Mammary epithelial cell (primary cell): ENCODE measurements at regions of chr6 and their contacts with region 1.

Region 1: DNA sequence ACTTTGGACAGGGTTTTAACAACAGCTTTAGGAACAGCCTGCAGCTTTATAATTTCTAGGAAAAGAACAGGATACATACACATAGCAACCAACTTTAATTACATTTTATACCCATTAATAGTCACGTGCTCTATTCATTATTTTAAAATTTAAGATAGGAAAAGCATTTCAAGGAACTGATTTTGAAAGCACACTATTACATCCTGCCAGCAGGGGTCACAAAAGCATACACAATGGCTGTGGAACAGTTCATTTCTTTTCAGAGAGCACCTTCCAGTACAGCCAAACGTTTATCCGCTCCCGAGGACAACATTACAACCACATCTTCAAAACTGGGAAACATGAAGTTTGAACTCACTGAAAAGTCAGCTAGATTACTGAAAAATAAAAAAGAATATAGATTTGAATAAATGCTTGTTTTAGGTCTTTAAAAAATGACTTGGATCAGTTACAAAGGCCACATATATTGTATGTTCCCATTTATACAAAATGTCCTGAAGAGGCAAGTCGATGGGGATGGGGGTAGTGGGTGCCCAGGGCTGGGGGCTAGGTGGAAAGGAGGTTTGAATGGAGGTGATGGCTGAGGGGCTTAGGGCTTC is 104.6 kb upstream of the EXOC2 start:
- DNase-seq: peak; percentile 40
- H3K4me3 ChIP-seq: no peak overlapping the region
- H3K27ac ChIP-seq: no peak overlapping the region
- H3K4me1 ChIP-seq: no peaks in the 10 kb centered on the region
- H3K27me3 ChIP-seq: peaks cover 7% of the 10 kb centered on the region
- CTCF ChIP-seq: peak; percentile 62 to 76

Region 2: DNA sequence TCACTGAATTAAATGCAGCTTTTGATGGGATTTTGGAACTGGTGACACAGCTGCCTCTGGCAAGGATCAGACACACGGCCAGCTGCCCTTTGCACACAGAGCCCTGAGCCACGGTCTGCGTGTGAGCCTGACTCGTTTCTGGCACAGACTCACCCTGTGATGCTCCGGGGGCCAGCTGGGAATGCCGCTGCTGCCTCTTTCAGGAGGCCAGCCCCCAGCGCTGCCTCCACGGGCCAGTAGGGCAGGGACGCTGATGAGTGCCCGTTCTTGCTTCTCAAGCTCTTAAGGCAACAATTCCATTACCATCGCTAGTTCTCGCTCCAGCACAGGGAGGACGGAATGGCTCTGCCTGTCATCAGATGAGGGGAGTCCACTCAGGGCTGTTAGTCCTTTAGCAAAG is 344.4 kb before region 1 on chr6:
- CTCF ChIA-PET with region 1: no interaction called
- dilution Hi-C with region 1: no loop called
- in situ Hi-C with region 1: no loop called
- intact Hi-C with region 1: no loop called
- DNase-seq: no peak
- H3K4me3 ChIP-seq: no peak overlapping the region
- H3K27ac ChIP-seq: no peak overlapping the region
- H3K4me1 ChIP-seq: no peaks in the 10 kb centered on the region
- H3K27me3 ChIP-seq: peaks cover 2% of the 10 kb centered on the region
- CTCF ChIP-seq: no peak

Region 3: DNA sequence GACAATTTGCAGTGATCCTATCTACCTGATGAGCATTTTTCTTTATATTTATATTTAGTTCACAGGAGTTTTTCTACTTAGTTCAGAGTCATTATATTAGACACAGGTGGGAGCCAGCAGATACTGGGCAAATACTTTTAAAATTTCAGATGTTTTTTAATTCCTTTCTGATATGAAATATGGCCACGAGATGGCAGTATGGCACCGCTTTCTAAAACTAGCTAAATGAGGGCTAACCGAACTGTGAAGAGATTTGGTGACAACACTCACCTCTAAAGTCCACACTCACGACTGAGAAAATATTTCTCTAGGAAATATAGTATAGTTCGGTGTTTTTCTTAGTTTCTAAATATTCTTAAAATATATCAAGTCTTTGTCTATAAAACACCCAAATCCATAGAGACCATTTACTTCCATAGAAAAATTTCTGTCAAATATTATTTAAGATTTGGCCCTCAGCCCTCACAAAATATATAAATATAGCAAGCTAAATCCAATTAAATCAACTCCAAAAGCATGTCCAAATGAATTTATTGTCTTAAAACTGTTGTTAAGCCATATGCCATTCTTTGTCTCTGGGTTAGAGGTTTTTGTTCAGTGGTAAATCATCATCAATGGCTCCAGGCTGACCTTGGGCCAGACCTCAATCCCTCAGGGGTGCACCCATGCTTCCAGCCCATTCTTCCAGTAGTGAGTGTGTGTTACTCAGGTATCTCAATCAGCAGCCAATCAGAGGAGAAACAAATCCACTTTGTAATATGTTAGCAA is 204.3 kb before region 1 on chr6:
- CTCF ChIA-PET with region 1: interaction called, 3 read pairs
- dilution Hi-C with region 1: loop called (anchors 5 kb)
- in situ Hi-C with region 1: no loop called
- intact Hi-C with region 1: loop called (anchors 5 kb)
- DNase-seq: peak; percentile 26
- H3K4me3 ChIP-seq: no peak overlapping the region
- H3K27ac ChIP-seq: no peak overlapping the region
- H3K4me1 ChIP-seq: no peaks in the 10 kb centered on the region
- H3K27me3 ChIP-seq: no peaks in the 10 kb centered on the region
- CTCF ChIP-seq: peak; percentile 51 to 65

Region 4: DNA sequence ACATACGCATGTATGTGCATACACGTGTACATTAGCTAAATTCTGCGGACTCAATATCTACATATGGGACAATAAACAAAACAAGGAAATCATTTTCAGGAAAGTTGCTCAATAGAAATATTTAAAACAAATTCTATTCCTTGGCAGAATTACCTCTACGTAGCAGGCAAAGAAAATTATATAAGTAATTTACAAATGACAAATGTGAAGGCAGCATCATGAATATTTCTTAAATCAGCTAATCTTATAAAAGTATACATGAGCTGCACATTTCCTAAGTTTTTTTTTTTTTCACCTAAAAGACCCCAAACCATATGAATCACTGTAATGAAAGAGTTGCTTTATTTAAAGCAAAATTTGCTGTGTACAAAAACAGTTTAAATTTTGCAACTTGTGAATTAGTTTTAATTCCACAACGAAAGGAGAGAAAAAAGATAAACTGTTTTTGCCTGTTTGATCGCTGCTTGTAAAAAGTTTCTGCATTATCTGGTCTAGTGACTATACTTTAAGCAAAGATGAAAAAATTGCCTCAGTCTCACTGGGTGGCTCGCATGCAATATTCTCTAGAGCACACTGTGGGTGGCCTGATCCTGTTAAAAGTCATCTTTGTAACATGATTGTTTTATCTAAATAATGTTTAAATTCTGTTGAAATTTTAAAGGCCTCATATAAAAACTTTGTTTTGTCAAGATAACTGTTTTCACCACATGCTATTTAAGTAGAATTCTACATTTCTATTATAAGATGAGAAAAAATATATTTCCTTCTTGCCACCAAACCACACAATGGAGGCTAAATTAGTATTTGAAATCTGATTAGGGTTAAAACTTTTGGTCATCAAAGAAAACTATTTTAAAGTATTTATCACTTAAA is 197.8 kb before region 1 on chr6:
- CTCF ChIA-PET with region 1: no interaction called
- dilution Hi-C with region 1: loop called (anchors 5 kb)
- in situ Hi-C with region 1: no loop called
- intact Hi-C with region 1: no loop called
- DNase-seq: no peak
- H3K4me3 ChIP-seq: no peak overlapping the region
- H3K27ac ChIP-seq: no peak overlapping the region
- H3K4me1 ChIP-seq: no peaks in the 10 kb centered on the region
- H3K27me3 ChIP-seq: no peaks in the 10 kb centered on the region
- CTCF ChIP-seq: no peak

Region 5: DNA sequence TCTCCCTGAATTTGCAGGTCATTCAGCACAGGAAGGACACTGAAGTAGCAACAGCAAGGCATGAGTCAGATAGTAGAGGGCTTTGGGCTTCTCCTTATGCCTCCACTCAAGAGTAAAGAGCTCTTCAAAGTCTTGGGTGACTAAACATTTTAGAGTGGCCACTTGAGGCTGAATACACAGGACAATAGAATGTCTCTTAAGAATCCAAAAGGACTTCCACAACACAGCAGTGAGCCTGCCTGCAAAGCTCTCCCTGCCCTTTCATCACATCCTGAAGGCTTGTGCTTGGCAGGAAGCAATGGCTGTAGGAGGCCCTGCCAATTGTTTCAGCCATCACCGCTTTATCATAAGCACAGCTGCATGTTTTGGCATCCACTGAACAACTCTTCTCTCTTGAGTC is 551.1 kb after region 1 on chr6:
- CTCF ChIA-PET with region 1: no interaction called
- dilution Hi-C with region 1: no loop called
- in situ Hi-C with region 1: loop called in 1 of 2 experiments (anchors 10 kb)
- intact Hi-C with region 1: no loop called
- DNase-seq: no peak
- H3K4me3 ChIP-seq: no peak overlapping the region
- H3K27ac ChIP-seq: no peak overlapping the region
- H3K4me1 ChIP-seq: no peaks in the 10 kb centered on the region
- H3K27me3 ChIP-seq: no peaks in the 10 kb centered on the region
- CTCF ChIP-seq: no peak

Region 6: DNA sequence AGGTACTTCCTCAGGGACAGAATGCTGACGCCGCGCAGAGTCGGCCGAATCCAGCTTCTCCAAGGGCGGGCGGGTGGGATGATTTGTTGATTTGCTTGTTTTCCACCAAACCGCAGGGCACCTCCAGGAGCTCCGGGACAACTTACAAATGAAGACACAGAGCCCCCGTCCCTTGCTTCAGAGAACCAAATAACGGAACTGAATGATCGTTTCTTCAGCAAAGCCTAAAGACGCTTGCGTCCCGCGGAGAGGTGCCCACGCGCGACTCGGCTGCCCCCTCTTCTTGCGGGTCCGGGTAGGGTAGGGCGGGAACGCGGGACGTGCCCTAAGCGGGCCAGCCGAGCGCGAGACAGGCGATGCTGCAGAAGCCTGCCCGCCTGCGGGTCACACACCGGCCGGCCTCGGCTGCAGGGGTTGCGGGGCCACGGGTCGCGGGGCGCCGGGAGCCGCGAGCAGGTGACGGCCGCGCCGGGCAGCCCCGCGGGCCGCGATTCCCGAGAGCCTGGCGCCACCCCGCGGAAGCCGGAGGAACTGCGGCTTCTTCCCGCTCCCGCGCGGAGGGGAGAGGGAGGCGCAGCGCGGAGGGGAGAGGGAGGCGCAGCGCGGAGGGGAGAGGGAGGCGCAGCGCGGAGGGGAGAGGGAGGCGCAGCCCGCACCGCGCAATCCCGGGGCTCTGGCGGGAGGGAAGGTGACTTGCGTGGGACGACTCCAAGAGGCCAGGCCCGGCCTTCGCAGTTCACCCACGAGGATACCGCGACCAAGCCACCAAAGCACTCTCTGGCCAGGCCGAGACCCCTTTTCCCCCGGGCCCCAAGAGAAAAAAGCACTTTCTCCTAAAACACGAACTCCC is 584.1 kb after region 1 on chr6:
- CTCF ChIA-PET with region 1: no interaction called
- dilution Hi-C with region 1: no loop called
- in situ Hi-C with region 1: no loop called
- intact Hi-C with region 1: loop called (anchors 1 kb)
- DNase-seq: no peak
- H3K4me3 ChIP-seq: peak overlapping the region in 2 of 3 experiments; percentile 24 to 29
- H3K27ac ChIP-seq: no peak overlapping the region
- H3K4me1 ChIP-seq: peaks cover 13% of the 10 kb centered on the region
- H3K27me3 ChIP-seq: peaks cover 81% of the 10 kb centered on the region
- CTCF ChIP-seq: peak; percentile 57 to 59

Region 7: DNA sequence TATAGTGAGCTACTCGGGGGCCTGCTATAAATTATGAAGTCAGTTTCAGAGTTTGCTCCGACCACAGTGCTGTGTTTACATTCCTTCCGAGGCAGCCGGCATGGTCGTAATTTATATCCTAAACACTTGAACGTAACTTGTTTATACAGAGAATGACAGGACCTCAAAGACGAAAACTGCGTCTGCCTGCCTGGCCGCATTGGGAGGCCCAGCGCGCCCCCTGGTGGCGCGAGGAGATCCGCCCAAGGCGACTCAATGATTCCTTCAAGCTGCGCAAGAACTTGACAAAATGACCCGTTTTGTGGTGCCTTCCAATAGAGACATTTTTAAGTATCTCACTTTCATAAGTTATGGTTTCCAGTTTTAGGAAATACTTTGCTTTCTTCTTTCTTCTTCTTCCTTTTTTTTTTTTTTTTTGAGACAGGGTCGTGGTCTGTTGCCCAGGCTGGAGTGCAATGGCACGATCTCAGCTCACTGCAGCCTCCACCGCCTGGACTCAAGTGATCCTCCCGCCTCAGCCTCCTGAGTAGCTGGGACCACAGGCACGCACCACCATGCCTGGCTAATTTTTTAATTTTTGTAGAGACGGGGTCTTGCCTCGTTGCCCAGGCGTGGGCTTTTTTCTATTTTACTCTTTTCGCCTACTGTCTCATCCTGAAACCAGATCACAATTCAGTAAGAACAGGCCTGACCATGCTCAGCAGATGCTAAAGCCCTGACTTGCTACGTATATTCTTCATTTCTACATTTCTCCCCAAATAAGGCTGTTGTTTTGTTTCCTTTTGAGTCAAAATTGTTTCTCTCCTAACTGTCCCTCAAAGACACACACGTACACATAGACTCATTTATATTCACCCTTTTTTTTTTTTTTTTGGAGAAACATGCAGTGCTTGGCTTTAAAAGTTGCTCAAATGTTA is 599.6 kb after region 1 on chr6:
- CTCF ChIA-PET with region 1: no interaction called
- dilution Hi-C with region 1: no loop called
- in situ Hi-C with region 1: no loop called
- intact Hi-C with region 1: loop called (anchors 1 kb)
- DNase-seq: peak; percentile 46
- H3K4me3 ChIP-seq: no peak overlapping the region
- H3K27ac ChIP-seq: no peak overlapping the region
- H3K4me1 ChIP-seq: peaks cover 5% of the 10 kb centered on the region
- H3K27me3 ChIP-seq: peaks cover 23% of the 10 kb centered on the region
- CTCF ChIP-seq: peak; percentile 95 to 98